Dendritic cell treated with granulocyte-macrophage colony-stimulating factor and Interleukin-4, amounts not matched to agents 40 ng/mL and 50 ng/mL, for 4 days (primary cell): ENCODE measurements at regions of chrX and their contacts with region 1.

Region 1: DNA sequence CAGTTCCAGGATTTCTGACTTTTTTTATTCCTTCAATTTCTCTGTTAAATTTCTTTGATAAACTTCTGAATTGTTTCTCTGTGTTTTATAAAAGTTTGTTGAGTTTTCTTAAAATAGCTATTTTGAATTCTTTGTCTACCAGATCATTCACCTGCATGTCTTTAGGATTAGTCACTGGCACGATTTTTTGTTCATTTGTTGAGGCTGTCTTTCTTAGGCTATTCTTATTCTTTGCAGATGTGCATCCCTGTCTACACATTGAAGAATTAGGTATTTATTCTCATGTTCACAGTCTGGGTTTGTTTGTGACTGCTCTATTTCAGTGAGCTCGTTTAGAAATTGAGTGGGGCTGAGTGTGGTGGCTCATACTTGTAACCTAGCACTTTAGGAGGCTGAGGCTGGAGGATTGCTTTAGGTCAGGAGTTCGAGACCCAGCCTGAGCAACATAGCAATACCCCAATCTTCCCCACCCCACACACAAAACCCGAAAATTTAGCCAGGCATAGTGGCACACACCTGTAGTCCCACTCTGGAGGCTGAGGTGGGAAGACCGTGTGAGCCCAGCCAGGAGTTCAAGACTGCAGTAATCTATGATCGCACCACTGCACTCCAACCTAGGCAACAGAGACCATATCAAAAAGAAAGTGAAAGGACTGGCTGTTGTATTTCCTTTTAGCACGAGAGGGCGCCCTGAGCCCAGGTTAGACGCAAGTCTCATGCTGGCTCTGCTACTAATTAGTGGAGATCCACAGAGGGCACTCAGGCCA is 42.0 kb downstream of the F8 start:
- H3K4me3 Mint-ChIP-seq: peak overlapping the region; percentile 74
- H3K27ac Mint-ChIP-seq: peak overlapping the region; percentile 75
- H3K4me1 Mint-ChIP-seq: peaks cover 15% of the 10 kb centered on the region
- H3K27me3 Mint-ChIP-seq: no peaks in the 10 kb centered on the region

Region 2: DNA sequence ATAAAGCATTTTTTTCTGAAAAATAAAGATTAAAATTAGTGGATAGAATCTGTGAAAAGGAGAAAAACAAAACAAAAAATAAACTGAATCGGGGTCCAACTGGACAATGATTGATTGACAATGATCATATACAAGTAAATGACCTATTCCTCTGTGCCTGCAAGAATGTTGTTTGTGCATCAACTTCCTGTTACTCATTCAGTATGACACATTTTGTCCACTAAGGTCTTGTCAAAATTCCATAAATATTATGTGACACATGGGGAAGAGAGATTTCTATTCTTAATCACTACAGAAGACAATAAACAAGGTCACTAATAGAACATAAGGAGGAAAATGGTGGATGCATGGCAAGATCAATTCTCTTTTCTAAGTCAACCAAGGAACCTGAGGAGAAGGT is 12.9 kb before region 1 on chrX:
- intact Hi-C with region 1: no loop called
- H3K4me3 Mint-ChIP-seq: no peak overlapping the region
- H3K27ac Mint-ChIP-seq: no peak overlapping the region
- H3K4me1 Mint-ChIP-seq: no peaks in the 10 kb centered on the region
- H3K27me3 Mint-ChIP-seq: no peaks in the 10 kb centered on the region

Region 3: GRCh38 chrX:155056877-155057792 is 76.6 kb after region 1 on chrX:
- intact Hi-C with region 1: loop called (anchors 1 kb)
- H3K4me3 Mint-ChIP-seq: no peak overlapping the region
- H3K27ac Mint-ChIP-seq: no peak overlapping the region
- H3K4me1 Mint-ChIP-seq: no peaks in the 10 kb centered on the region
- H3K27me3 Mint-ChIP-seq: no peaks in the 10 kb centered on the region